ENCODE measurements at regions of chr11 and their contacts with region 1.

Region 1: DNA sequence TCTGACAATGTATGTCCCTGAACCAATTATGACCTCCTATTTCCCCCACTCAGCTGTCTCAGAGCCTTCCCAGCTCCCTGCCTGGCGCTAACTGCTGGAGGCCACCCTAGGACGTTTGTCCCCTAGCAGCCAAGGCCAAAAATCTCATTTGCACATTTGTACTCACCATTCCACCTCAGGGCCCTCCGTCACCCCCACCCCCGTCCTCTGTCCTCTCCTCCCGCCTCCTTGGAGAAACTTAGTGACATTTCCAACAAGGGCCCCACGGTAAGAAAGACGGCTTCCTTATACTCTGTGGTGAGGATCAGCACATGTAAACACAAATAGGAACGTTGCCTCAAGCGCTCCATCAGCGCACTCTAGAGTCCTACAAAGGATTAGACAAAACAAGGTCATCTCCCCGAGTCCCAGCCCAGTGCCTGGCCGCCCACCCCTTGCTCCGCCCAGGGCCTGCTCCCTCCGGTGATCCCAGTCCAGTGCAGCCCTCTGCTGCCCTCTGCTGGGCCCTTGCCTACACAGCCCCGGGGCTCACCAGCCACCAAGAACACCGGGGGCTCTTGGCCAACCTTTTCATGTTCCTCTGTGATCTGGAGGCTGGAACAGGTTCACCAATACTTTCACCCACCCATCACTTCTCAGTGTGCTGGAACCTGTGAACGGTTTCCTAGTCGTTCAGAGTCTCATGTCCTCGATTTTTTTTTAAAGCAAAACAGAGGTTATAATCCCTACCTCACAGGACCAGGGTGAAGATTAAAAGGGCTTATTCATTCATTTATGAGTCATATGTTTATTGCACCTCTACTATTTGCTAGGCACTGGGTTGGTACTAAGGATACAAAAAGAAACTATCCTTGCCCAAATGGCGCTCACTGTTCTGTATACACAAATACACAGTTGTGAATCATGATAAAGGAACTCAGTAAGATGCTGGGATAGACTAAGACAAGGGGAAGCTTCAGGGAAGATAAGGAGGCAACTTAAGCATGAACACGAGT is 15.3 kb upstream of the CTR9 start:
- DNase-seq: peak; percentile 92
- ATAC-seq: peak; percentile 100
- H3K4me3 ChIP-seq: peak overlapping the region in 2 of 5 experiments; percentile 25 to 28
- H3K4me3 Mint-ChIP-seq: peak overlapping the region; percentile 86
- H3K27ac ChIP-seq: peak overlapping the region; percentile 22 to 35
- H3K27ac Mint-ChIP-seq: peak overlapping the region; percentile 95
- H3K4me1 ChIP-seq: peaks cover 7 to 13% of the 10 kb centered on the region in 2 donors
- H3K4me1 Mint-ChIP-seq: peaks cover 13% of the 10 kb centered on the region
- H3K27me3 ChIP-seq: no peaks in the 10 kb centered on the region
- H3K27me3 Mint-ChIP-seq: no peaks in the 10 kb centered on the region
- CTCF ChIP-seq: peak; percentile 94

Region 2: DNA sequence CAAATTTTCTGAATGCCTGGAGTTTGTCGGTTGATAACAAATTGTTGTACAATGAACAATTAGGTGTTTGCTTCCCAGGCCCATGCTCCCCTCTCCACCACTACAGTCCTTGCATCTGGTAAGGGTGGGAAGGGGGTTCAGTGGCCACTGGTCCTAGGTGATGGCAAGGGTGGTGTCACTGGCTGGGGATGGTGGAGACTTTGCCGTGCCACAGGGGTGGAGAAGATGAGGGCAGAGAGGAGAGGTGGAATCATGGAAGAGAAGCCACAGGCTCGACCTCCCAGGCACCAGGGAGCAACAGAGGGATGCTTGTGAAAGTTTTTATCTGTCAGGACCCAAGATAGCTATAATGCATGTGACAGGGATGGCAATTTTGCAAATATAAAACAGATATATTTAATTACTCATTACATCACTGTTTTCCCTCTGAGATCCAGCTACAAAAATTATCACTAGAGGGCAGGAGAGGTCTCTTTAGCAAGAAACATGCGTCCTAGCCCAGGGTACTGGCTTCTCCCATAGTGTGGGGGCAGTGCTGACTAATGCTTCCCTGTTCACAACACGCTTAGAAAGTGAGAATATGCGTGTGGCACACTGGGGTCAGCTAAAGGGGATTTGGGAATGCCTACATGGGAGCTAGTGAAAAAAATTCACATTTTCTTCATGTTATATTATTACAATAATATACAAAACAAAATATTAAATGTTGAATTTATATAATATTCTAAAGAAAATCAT is 329.8 kb before region 1 on chr11:
- CTCF ChIA-PET with region 1: interaction called, 171 read pairs
- POLR2A ChIA-PET with region 1: no interaction called
- intact Hi-C with region 1: loop called (anchors 1 kb)
- DNase-seq: peak; percentile 72
- ATAC-seq: peak; percentile 85
- H3K4me3 ChIP-seq: no peak overlapping the region
- H3K4me3 Mint-ChIP-seq: no peak overlapping the region
- H3K27ac ChIP-seq: no peak overlapping the region
- H3K27ac Mint-ChIP-seq: no peak overlapping the region
- H3K4me1 ChIP-seq: peaks cover 4 to 11% of the 10 kb centered on the region in 2 donors
- H3K4me1 Mint-ChIP-seq: peaks cover 7% of the 10 kb centered on the region
- H3K27me3 ChIP-seq: no peaks in the 10 kb centered on the region
- H3K27me3 Mint-ChIP-seq: no peaks in the 10 kb centered on the region
- CTCF ChIP-seq: peak; percentile 78

Region 3: GRCh38 chr11:10514210-10514609 is 221.6 kb before region 1 on chr11:
- CTCF ChIA-PET with region 1: interaction called, 11 read pairs
- POLR2A ChIA-PET with region 1: no interaction called
- intact Hi-C with region 1: loop called (anchors 1 kb)
- DNase-seq: peak; percentile 42
- ATAC-seq: no peak
- H3K4me3 ChIP-seq: no peak overlapping the region
- H3K4me3 Mint-ChIP-seq: no peak overlapping the region
- H3K27ac ChIP-seq: peak overlapping the region in 1 of 2 donors; percentile 7
- H3K27ac Mint-ChIP-seq: peak overlapping the region; percentile 43
- H3K4me1 ChIP-seq: no peaks in the 10 kb centered on the region
- H3K4me1 Mint-ChIP-seq: peaks cover 16% of the 10 kb centered on the region
- H3K27me3 ChIP-seq: no peaks in the 10 kb centered on the region
- H3K27me3 Mint-ChIP-seq: no peaks in the 10 kb centered on the region
- CTCF ChIP-seq: peak; percentile 62

Region 4: GRCh38 chr11:10564696-10565318 is 171.0 kb before region 1 on chr11:
- CTCF ChIA-PET with region 1: interaction called, 10 read pairs
- POLR2A ChIA-PET with region 1: no interaction called
- intact Hi-C with region 1: loop called (anchors 1 kb)
- DNase-seq: peak; percentile 55
- ATAC-seq: peak; percentile 43
- H3K4me3 ChIP-seq: no peak overlapping the region
- H3K4me3 Mint-ChIP-seq: no peak overlapping the region
- H3K27ac ChIP-seq: peak overlapping the region in 1 of 2 donors; percentile 14
- H3K27ac Mint-ChIP-seq: peak overlapping the region; percentile 71
- H3K4me1 ChIP-seq: peaks cover 17 to 35% of the 10 kb centered on the region in 2 donors
- H3K4me1 Mint-ChIP-seq: peaks cover 53% of the 10 kb centered on the region
- H3K27me3 ChIP-seq: no peaks in the 10 kb centered on the region
- H3K27me3 Mint-ChIP-seq: no peaks in the 10 kb centered on the region
- CTCF ChIP-seq: peak; percentile 22

Measured in B cell (primary cell).